Dorsolateral prefrontal cortex (tissue), 120 donors: ENCODE measurements at regions of chr2 and their contacts with region 1.

Region 1: GRCh38 chr2:120693121-120693520 is 42.5 kb upstream of the GLI2 start:
- DNase-seq: no peak
- H3K4me3 ChIP-seq: no peak overlapping the region
- H3K27ac ChIP-seq: no peak overlapping the region
- H3K27me3 ChIP-seq: peaks cover 0 to 22% (median 7%) of the 10 kb centered on the region in 45 donors
- CTCF ChIP-seq: no peak

Region 2: GRCh38 chr2:120680136-120680761 is 12.9 kb before region 1 on chr2:
- intact Hi-C with region 1: no loop called
- DNase-seq: peak; percentile 68 to 89 (median 84)
- H3K4me3 ChIP-seq: peak overlapping the region in 3 of 59 donors; percentile 17 to 23 (median 23)
- H3K27ac ChIP-seq: no peak overlapping the region
- H3K27me3 ChIP-seq: peaks cover 0 to 22% (median 5%) of the 10 kb centered on the region in 45 donors
- CTCF ChIP-seq: peak in 54 of 56 donors; percentile 34 to 73 (median 59)

Region 3: DNA sequence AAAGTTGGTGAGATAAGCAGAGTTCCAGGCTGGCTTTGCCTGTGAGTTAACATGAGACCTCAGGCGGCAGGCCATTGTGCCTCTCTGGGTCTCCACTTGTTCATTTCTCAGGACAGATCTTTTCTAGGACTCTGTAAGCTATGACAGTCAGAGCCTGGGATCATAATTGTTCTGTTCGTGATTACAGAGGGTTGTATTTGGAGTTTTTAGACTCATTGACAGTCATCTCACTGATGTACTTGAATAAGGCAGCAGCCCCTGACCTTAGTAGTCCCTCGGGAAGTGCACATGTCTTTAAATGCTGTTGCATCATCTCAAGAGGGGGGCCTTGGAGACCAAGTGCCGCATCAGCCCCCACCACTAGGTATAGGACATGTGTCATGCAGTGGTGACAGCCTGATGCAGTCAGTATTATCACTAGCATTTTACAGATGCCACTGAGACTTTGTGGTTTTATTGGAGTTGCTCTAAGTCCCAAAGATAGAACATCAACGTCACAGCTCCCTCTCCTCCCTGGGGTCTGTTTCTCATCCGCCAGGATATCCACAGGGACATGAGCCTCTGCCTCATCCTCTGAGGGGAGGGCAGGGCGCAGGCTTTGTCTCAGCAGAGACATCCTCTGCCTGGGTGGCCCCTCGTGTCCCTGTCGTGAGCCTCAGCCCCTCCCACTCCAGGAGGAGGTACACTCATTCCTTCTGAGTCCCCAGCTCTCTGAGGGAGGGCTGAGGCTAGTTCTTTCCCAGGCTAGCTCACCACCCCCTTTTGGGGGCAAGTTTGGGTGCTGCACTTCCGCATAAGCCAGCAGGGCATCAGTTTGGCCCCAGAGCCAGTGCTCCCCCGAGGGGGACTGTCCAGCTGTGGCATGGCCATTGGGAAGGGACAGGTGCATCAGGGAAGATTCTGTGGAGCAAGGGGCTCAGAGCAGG is 56.6 kb after region 1 on chr2:
- intact Hi-C with region 1: no loop called
- DNase-seq: peak in 1 of 10 donors; percentile 28
- H3K4me3 ChIP-seq: no peak overlapping the region
- H3K27ac ChIP-seq: peak overlapping the region in 1 of 59 donors; percentile 8
- H3K27me3 ChIP-seq: peaks cover 0 to 32% (median 10%) of the 10 kb centered on the region in 45 donors
- CTCF ChIP-seq: no peak

Region 4: GRCh38 chr2:121076885-121077549 is 383.9 kb after region 1 on chr2:
- intact Hi-C with region 1: loop called (anchors 1 to 2 kb)
- DNase-seq: peak in 2 of 10 donors; percentile 24 to 38
- H3K4me3 ChIP-seq: no peak overlapping the region
- H3K27ac ChIP-seq: no peak overlapping the region
- H3K27me3 ChIP-seq: peaks cover 0 to 18% (median 0%) of the 10 kb centered on the region in 45 donors
- CTCF ChIP-seq: peak; percentile 39 to 79 (median 65)

Region 5: GRCh38 chr2:121345887-121346286 is 652.8 kb after region 1 on chr2:
- intact Hi-C with region 1: loop called in 1 of 2 experiments (anchors 10 kb)
- DNase-seq: no peak
- H3K4me3 ChIP-seq: no peak overlapping the region
- H3K27ac ChIP-seq: peak overlapping the region in 36 of 59 donors; percentile 9 to 74 (median 46)
- H3K27me3 ChIP-seq: no peaks in the 10 kb centered on the region
- CTCF ChIP-seq: no peak

Region 6: DNA sequence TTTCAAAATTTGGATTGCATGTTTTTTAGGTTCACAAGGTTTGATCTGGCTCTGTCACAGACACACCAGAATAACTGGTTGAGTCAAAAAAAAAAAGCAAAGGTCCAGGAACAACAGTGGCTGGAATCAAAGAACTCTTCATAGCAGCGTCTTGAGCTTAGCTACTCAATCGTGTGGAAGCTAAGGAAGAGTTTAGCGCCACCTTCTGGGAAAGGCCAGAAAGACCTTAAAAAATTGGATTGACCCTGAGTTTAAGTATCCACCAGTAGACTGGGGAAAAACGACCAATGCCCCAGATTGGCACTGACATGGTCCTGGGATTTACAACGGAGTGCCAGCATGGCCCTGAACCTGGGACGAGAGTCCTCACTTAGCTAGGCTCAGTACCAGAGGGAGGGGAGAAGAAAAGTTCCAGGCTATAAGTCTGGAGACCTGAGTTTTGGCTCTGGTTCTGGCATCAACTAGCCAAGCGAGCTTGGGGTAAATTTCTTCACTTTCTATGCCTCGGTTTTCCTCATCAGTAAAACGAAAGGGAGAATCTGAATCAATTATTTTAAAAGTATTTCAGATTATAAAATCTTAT is 663.0 kb after region 1 on chr2:
- intact Hi-C with region 1: loop called in 1 of 2 experiments (anchors 10 kb)
- DNase-seq: peak in 2 of 10 donors; percentile 48 to 49
- H3K4me3 ChIP-seq: no peak overlapping the region
- H3K27ac ChIP-seq: peak overlapping the region in 14 of 59 donors; percentile 6 to 50 (median 25)
- H3K27me3 ChIP-seq: no peaks in the 10 kb centered on the region
- CTCF ChIP-seq: peak; percentile 48 to 87 (median 72)

Region 7: DNA sequence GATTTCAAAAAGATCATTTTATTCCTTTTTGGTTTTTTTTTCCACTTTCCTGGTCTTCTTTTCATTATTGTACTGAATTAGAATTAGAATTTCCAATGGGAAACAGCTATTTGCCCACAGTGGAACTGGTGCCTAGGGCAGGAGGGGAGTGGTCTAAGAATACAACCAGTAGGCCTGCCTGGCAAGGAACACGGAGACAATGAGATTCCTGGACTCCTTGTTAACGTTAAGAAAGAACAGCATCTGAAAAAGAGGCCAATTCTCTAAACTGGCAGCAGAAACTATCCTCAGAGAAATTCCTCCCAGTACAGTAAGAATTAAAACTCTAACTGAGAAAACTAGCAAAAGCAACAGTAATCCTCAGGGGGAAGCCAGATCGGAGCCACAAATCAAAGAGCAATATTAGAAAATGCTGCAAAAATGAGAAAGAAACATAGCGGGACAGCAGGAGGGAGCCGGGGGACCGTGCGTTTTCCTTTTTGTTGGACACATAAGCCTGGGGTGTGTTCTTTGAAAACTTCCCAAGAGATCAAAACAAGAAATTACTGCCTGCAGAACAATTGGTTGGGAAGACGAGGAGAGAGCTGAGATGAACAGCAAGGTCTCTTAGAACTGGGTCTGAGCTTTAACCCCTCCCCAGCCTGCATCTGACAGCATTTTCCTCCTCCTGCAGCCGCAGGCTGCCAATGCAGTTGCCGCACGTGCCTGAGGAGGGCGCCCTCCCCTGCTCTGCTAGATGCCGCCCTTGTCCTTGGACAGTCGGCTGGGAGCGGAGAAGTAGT is 1838.4 kb after region 1 on chr2:
- intact Hi-C with region 1: no loop called
- DNase-seq: no peak
- H3K4me3 ChIP-seq: peak overlapping the region in 19 of 59 donors; percentile 1 to 42 (median 21)
- H3K27ac ChIP-seq: no peak overlapping the region
- H3K27me3 ChIP-seq: peaks cover 0 to 6% (median 0%) of the 10 kb centered on the region in 45 donors
- CTCF ChIP-seq: peak in 7 of 56 donors; percentile 7 to 27 (median 10)